ENCODE measurements at regions of chr1 and their contacts with region 1.

Region 1: DNA sequence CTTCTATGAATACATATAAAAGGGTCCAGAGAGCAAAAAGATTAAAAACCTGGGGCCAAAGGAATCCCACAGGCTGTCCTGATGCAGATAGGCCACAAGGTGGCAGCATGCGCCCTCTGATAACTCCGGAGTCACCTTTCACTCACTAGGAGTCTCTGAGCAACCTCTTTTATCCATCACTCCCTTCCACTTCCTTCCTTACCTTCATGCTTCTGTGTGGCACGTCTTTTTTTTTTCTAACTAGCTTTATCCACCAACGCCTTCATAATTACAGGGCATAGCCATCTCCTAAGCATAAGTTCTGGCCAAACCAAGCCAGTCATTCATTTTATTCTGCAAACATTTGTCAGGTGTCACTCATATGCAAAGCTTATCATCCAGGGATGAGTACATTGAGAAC is 3.9 kb upstream of the PGLYRP4 start:
- DNase-seq: peak; percentile 79 to 82 (median 80)
- ATAC-seq: peak; percentile 85
- H3K4me3 ChIP-seq: no peak overlapping the region
- H3K27ac ChIP-seq: no peak overlapping the region
- H3K4me1 ChIP-seq: peaks cover 0 to 3% of the 10 kb centered on the region in 2 experiments; a peak in 1 of 5 replicates
- H3K27me3 ChIP-seq: peaks cover 7 to 31% of the 10 kb centered on the region in 2 experiments; a peak in 4 of 5 replicates
- CTCF ChIP-seq: peak; percentile 87 to 97 (median 91)
- EP300 ChIP-seq: no peak
- POLR2A ChIP-seq: no peak
- RAD21 ChIP-seq: peak; percentile 78 to 86

Region 2: GRCh38 chr1:153023109-153023508 is 329.4 kb before region 1 on chr1:
- CTCF ChIA-PET with region 1: no interaction called
- POLR2A ChIA-PET with region 1: no interaction called
- in situ Hi-C with region 1: no loop called
- intact Hi-C with region 1: no loop called
- DNase-seq: no peak
- ATAC-seq: peak; percentile 32; the same call in 1 of the 3 replicates
- H3K4me3 ChIP-seq: no peak overlapping the region
- H3K27ac ChIP-seq: no peak overlapping the region
- H3K4me1 ChIP-seq: no peaks in the 10 kb centered on the region; a peak in 1 of 5 replicates
- H3K27me3 ChIP-seq: 0 out of 5 replicates have a peak, but pooled peaks cover 0 to 4% of the 10 kb centered on the region in 2 experiments
- CTCF ChIP-seq: no peak
- EP300 ChIP-seq: no peak
- POLR2A ChIP-seq: no peak
- RAD21 ChIP-seq: no peak

Region 3: GRCh38 chr1:153400244-153400643 is 47.7 kb after region 1 on chr1:
- CTCF ChIA-PET with region 1: interaction called, 3 read pairs
- POLR2A ChIA-PET with region 1: no interaction called
- in situ Hi-C with region 1: no loop called
- intact Hi-C with region 1: loop called (anchors 2 kb)
- DNase-seq: peak in 3 of 4 experiments; percentile 30 to 44 (median 37)
- ATAC-seq: peak; percentile 90
- H3K4me3 ChIP-seq: no peak overlapping the region
- H3K27ac ChIP-seq: no peak overlapping the region
- H3K4me1 ChIP-seq: no peaks in the 10 kb centered on the region
- H3K27me3 ChIP-seq: peaks cover 31 to 64% of the 10 kb centered on the region in 2 experiments; a peak in 4 of 5 replicates
- CTCF ChIP-seq: peak; percentile 55 to 63 (median 61)
- EP300 ChIP-seq: no peak
- POLR2A ChIP-seq: no peak
- RAD21 ChIP-seq: peak; percentile 40 to 83

Region 4: DNA sequence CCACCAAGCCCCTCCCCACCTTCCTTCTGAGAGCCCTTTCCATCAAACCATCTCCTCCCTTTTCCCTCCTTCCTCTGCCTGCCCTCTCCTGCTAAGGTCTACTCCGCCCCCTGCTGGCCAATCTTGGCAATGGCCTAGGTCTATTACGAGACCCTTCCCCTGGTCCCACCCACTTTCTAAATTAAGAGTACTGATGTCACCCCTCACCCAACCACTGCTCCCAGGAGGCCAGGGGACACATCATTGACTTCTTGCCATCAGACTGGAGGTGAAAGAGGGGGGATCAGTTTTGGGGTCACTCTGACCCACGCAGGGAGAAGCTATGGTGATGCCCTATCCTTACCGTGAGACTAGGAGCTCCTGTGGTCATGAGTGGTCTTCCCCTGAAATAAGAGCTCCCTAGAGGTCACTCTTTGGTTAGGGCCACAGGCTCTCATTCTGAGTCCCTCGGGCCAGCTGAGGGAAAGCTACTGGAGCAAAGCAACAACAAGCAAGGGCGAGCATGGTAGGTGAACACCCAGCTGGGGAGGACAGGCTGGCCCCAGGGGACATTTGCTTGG is 142.5 kb after region 1 on chr1:
- CTCF ChIA-PET with region 1: interaction called, 48 read pairs
- POLR2A ChIA-PET with region 1: interaction called, 9 read pairs
- in situ Hi-C with region 1: no loop called
- intact Hi-C with region 1: loop called (anchors 1 kb)
- DNase-seq: peak; percentile 75 to 82 (median 79)
- ATAC-seq: peak; percentile 96
- H3K4me3 ChIP-seq: no peak overlapping the region
- H3K27ac ChIP-seq: no peak overlapping the region
- H3K4me1 ChIP-seq: no peaks in the 10 kb centered on the region
- H3K27me3 ChIP-seq: peaks cover 11 to 21% of the 10 kb centered on the region in 2 experiments; a peak in 4 of 5 replicates
- CTCF ChIP-seq: peak; percentile 88 to 94 (median 93)
- EP300 ChIP-seq: no peak
- POLR2A ChIP-seq: no peak
- RAD21 ChIP-seq: peak; percentile 93 to 98

Region 5: DNA sequence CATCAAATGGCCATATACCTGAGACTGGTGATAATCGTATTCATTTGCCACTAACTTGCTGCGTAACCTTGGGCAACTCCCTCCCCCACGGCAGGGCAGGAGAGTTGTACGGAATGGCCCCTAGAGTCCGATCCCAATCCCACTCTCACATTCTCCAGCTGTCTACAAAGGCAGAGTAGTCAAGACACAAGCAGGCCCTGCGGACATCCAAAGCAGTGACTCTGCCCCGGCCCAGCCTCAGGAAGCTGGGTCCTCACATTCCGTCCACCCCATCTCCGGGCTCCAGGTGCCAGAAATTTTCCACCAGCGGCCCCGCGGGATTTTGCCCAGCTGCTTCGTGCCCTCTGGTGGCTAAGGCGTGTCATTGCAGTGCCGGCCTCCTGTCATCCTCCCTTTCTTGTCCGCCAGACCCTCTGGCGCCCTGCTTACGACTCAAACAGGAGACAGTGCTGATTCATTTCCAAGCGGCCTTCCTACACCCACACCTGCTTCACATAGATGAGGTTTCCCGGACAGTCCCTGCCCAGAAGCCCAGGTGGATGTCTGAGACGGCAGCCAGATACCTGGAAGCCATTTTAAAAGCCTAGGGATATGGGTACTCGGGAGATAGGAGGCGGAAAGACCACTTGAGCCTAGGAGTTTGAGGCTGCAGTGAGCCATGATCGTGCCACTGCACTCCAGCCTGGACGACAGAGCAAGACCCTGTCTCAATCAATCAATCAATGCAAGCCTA is 216.0 kb after region 1 on chr1:
- CTCF ChIA-PET with region 1: interaction called, 3 read pairs
- POLR2A ChIA-PET with region 1: no interaction called
- in situ Hi-C with region 1: no loop called
- intact Hi-C with region 1: loop called (anchors 2 kb)
- DNase-seq: peak; percentile 89 to 92 (median 90)
- ATAC-seq: peak; percentile 81
- H3K4me3 ChIP-seq: no peak overlapping the region
- H3K27ac ChIP-seq: peak overlapping the region; percentile 63; the same call in 2 of the 3 replicates
- H3K4me1 ChIP-seq: peaks cover 38% of the 10 kb centered on the region in 2 experiments
- H3K27me3 ChIP-seq: no peaks in the 10 kb centered on the region
- CTCF ChIP-seq: peak; percentile 97 to 98 (median 98)
- EP300 ChIP-seq: peak; percentile 49; the same call in 1 of the 2 replicates
- POLR2A ChIP-seq: no peak
- RAD21 ChIP-seq: peak; percentile 99

Region 6: GRCh38 chr1:153749408-153750005 is 397.0 kb after region 1 on chr1:
- CTCF ChIA-PET with region 1: no interaction called
- POLR2A ChIA-PET with region 1: no interaction called
- in situ Hi-C with region 1: loop called (anchors 10 kb)
- intact Hi-C with region 1: no loop called
- DNase-seq: peak; percentile 80 to 84 (median 82)
- ATAC-seq: peak; percentile 100
- H3K4me3 ChIP-seq: no peak overlapping the region
- H3K27ac ChIP-seq: no peak overlapping the region
- H3K4me1 ChIP-seq: no peaks in the 10 kb centered on the region; a peak in 3 of 5 replicates
- H3K27me3 ChIP-seq: no peaks in the 10 kb centered on the region
- CTCF ChIP-seq: peak; percentile 93 to 95 (median 93)
- EP300 ChIP-seq: no peak
- POLR2A ChIP-seq: no peak
- RAD21 ChIP-seq: peak; percentile 83 to 95

Region 7: GRCh38 chr1:153763365-153764225 is 411.1 kb after region 1 on chr1:
- CTCF ChIA-PET with region 1: no interaction called
- POLR2A ChIA-PET with region 1: no interaction called
- in situ Hi-C with region 1: loop called (anchors 10 kb)
- intact Hi-C with region 1: loop called (anchors 10 kb)
- DNase-seq: no peak
- ATAC-seq: no peak
- H3K4me3 ChIP-seq: no peak overlapping the region
- H3K27ac ChIP-seq: no peak overlapping the region
- H3K4me1 ChIP-seq: no peaks in the 10 kb centered on the region
- H3K27me3 ChIP-seq: no peaks in the 10 kb centered on the region
- CTCF ChIP-seq: no peak
- EP300 ChIP-seq: no peak
- POLR2A ChIP-seq: no peak
- RAD21 ChIP-seq: no peak